Activated CD4-positive, alpha-beta T cell treated with anti-CD3 and anti-CD28 coated beads, Interleukin-2, amount 10 ng/mL, durations not matched to agents 24 days and 14 days (primary cell): ENCODE measurements at regions of chr11 and their contacts with region 1.

Region 1: DNA sequence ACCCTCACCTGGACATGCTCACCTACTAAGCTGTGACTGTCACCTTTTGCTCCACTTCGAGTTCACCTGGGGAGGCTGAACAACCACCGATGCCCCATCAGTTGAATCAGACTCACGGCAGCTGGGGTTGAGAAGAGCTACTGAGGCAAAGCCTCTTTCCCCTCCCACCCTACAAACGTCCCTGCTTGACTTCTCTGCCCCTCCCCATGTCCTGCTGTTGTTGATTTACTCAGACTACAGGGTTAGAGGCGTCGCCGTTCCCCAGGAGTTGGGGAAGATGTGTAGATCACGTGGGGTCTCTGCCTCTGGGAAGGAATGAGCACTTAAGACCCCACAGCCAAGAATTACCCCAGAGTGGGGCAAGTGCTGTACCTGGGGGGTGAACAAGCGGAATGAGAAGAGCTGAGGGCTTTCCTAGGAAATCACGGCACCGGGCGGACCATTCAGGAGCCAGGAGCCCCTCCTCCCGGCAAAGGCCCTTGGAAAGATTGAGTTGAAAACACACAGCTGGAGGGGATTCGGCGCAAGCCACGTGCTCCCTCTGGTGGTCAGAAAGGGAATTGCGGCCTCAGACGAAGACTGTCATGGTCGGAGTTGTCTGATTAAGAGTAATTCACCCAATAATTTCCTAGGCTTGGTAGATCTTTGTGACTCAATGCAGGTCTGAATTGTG is 7.0 kb downstream of the FXYD2 start:
- DNase-seq: peak; percentile 96
- H3K4me3 Mint-ChIP-seq: peak overlapping the region; percentile 79
- H3K27ac Mint-ChIP-seq: peak overlapping the region; percentile 99
- H3K4me1 Mint-ChIP-seq: peaks cover 63% of the 10 kb centered on the region
- H3K27me3 Mint-ChIP-seq: peaks cover 2% of the 10 kb centered on the region

Region 2: GRCh38 chr11:117232092-117232878 is 585.2 kb before region 1 on chr11 and contains the start of gene RNF214:
- intact Hi-C with region 1: loop called (anchors 5 kb)
- DNase-seq: peak; percentile 93
- H3K4me3 Mint-ChIP-seq: peak within 1 kb of the TSS; percentile 93
- H3K27ac Mint-ChIP-seq: peak within 1 kb of the TSS; percentile 100
- H3K4me1 Mint-ChIP-seq: peaks cover 38% of the 10 kb centered on the region
- H3K27me3 Mint-ChIP-seq: no peaks in the 10 kb centered on the region
- total RNA-seq, gene RNF214: 22.0 and 23.2 TPM in 2 replicates

Region 3: GRCh38 chr11:117985953-117986887 is 168.7 kb after region 1 on chr11 and contains the start of gene IL10RA:
- intact Hi-C with region 1: loop called (anchors 5 kb)
- DNase-seq: peak; percentile 98
- H3K4me3 Mint-ChIP-seq: peak within 1 kb of the TSS; percentile 88
- H3K27ac Mint-ChIP-seq: peak within 1 kb of the TSS; percentile 98
- H3K4me1 Mint-ChIP-seq: peaks cover 69% of the 10 kb centered on the region
- H3K27me3 Mint-ChIP-seq: no peaks in the 10 kb centered on the region
- total RNA-seq, gene IL10RA: 86.6 and 89.9 TPM in 2 replicates

Region 4: DNA sequence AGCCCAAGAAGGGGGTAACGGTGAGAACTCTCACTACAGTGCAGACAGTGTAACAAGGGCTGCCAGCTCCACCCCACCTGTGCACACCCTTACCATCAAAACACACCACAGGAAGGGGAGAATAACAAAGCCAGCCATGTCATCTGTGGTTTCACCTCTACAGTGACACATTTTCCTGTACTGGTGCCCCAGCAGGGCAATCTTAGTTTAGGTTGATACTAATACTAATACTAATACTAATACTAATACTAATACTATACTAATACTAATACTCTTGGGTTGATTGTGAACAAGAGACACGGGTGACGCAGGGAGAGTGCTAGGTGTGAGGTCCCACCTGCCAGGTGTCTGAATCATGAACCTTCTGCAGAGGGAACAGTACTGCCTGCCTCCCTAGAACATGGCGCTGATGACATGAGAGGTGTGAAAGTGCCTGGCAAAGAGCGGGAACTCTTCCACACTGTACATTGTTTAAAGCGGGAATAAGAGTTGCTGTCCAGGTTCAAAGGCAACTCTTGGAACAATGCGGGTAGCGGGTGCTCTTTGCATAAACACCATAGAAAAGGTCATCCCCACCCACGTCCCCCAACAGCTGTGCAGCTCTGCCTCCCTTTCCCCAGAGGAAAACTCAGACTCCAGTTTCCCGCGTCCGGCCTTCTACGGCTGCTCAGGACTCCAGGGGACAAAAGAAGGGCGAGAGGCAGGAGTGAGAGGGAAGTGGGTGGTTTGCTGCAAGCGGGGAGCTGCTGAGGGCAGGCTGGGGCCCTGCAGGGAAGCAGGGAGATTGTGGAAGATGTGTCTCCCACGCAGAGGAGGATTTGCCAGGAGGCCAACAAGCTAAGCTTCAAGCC is 234.3 kb after region 1 on chr11:
- intact Hi-C with region 1: loop called (anchors 1 kb)
- DNase-seq: peak; percentile 90
- H3K4me3 Mint-ChIP-seq: peak overlapping the region; percentile 69
- H3K27ac Mint-ChIP-seq: peak overlapping the region; percentile 94
- H3K4me1 Mint-ChIP-seq: peaks cover 57% of the 10 kb centered on the region
- H3K27me3 Mint-ChIP-seq: peaks cover 5% of the 10 kb centered on the region